ENCODE measurements at regions of chr1 and their contacts with region 1.

Region 1: DNA sequence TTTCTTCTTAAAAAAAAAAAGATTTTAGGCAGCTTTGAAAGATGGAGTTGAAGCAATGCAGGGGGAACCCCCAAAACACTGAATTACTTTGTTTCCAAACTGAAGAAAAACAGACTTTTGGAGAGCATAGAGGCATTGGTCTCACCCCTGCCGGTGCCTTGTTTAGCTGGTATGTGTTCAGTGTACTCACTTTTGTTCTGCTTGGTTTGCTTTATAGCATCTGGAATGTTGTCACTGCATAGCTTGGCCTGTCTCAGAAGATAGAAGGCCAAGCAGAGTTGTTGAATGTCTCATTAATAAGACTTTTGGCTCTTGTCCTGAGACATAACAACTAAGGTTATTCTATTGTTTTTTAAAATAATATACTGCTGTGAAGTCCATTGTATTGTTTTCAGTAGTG is 6.9 kb downstream of the THRAP3 start:
- DNase-seq: no peak
- ATAC-seq: no peak
- H3K4me3 ChIP-seq: no peak overlapping the region
- H3K27ac ChIP-seq: no peak overlapping the region
- H3K4me1 ChIP-seq: peaks cover 4% of the 10 kb centered on the region; the same call in 1 of the 2 replicates
- H3K27me3 ChIP-seq: no peaks in the 10 kb centered on the region
- CTCF ChIP-seq: no peak
- POLR2A ChIP-seq: no peak
- RAD21 ChIP-seq: no peak

Region 2: GRCh38 chr1:35629051-35629450 is 602.1 kb before region 1 on chr1:
- CTCF ChIA-PET with region 1: no interaction called
- POLR2A ChIA-PET with region 1: no interaction called
- dilution Hi-C with region 1: no loop called
- in situ Hi-C with region 1: no loop called
- intact Hi-C with region 1: no loop called
- DNase-seq: no peak
- ATAC-seq: no peak
- H3K4me3 ChIP-seq: no peak overlapping the region
- H3K27ac ChIP-seq: no peak overlapping the region
- H3K4me1 ChIP-seq: no peaks in the 10 kb centered on the region
- H3K27me3 ChIP-seq: no peaks in the 10 kb centered on the region
- CTCF ChIP-seq: no peak
- POLR2A ChIP-seq: no peak
- RAD21 ChIP-seq: no peak

Region 3: GRCh38 chr1:36160949-36161485 is 70.2 kb before region 1 on chr1:
- CTCF ChIA-PET with region 1: no interaction called
- POLR2A ChIA-PET with region 1: no interaction called
- dilution Hi-C with region 1: no loop called
- in situ Hi-C with region 1: no loop called
- intact Hi-C with region 1: no loop called
- DNase-seq: peak; percentile 71
- ATAC-seq: peak; percentile 40
- H3K4me3 ChIP-seq: peak overlapping the region; percentile 32
- H3K27ac ChIP-seq: peak overlapping the region; percentile 89
- H3K4me1 ChIP-seq: peaks cover 22% of the 10 kb centered on the region
- H3K27me3 ChIP-seq: no peaks in the 10 kb centered on the region
- CTCF ChIP-seq: peak; percentile 46
- POLR2A ChIP-seq: peak; percentile 71; the same call in 1 of the 2 replicates
- RAD21 ChIP-seq: no peak

Region 4: DNA sequence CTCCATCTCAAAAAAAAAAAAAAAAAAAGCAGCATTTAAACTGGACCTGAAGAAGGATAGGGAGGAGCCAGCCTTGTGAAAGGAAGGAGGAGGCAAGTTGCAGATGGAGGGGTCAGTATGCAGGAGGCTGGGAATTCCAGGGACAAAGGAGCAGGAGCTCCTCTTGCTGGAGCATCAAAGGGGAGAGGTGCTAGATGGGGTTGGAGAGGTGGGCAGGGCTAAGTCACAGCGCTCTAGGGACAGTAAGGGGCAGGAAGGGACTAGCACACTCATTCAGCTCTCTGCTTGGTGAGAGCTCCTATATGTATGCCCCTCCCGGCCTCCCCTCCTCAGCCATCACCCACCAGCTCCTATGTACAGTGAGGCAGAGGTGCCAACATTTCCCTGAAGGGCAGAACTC is 48.5 kb before region 1 on chr1:
- CTCF ChIA-PET with region 1: no interaction called
- POLR2A ChIA-PET with region 1: interaction called, 11 read pairs
- dilution Hi-C with region 1: no loop called
- in situ Hi-C with region 1: no loop called
- intact Hi-C with region 1: no loop called
- DNase-seq: no peak
- ATAC-seq: no peak
- H3K4me3 ChIP-seq: no peak overlapping the region
- H3K27ac ChIP-seq: no peak overlapping the region
- H3K4me1 ChIP-seq: peaks cover 2% of the 10 kb centered on the region
- H3K27me3 ChIP-seq: no peaks in the 10 kb centered on the region
- CTCF ChIP-seq: no peak
- POLR2A ChIP-seq: no peak
- RAD21 ChIP-seq: no peak

Measured in IMR-90 (cell line).